ENCODE measurements at regions of chr17 and their contacts with region 1.

Region 1: DNA sequence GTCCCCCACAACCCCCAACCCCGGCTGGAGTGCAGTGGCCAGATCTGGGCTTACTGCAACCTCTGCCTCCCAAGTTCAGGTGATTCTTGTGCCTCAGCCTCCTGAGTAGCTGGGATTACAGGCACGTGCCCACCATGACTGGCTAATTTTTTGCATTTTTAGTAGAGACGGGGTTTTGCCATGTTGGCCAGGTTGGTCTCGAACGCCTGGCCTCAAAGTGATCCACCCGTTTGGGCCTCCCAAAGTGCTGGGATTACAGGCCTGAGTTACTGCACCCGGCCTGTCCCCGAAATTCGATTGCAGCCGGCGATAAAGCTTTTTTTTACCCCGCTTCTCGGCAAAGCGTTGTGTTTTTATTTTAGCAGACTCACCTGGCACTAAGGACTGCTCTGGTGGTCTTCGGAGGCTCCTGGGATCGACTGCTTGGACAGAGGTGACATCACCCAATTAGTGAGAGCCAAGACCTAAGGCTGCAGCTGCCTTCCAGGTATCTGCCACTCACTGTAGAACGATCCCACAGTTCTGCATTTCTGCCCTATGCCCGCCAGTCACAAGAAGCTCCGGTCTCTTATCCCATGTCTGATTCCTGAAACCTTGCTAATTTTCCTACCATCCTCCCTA is 82.2 kb upstream of the ARL4D start:
- DNase-seq: peak; percentile 13 to 45 (median 15)
- ATAC-seq: no peak
- H3K4me3 ChIP-seq: no peak overlapping the region
- H3K27ac ChIP-seq: no peak overlapping the region; the same call in 2 of the 3 replicates
- H3K4me1 ChIP-seq: peaks cover 2 to 11% of the 10 kb centered on the region in 2 experiments; a peak in 3 of 5 replicates
- H3K27me3 ChIP-seq: no peaks in the 10 kb centered on the region
- CTCF ChIP-seq: no peak
- EP300 ChIP-seq: no peak
- POLR2A ChIP-seq: no peak
- RAD21 ChIP-seq: no peak

Region 2: DNA sequence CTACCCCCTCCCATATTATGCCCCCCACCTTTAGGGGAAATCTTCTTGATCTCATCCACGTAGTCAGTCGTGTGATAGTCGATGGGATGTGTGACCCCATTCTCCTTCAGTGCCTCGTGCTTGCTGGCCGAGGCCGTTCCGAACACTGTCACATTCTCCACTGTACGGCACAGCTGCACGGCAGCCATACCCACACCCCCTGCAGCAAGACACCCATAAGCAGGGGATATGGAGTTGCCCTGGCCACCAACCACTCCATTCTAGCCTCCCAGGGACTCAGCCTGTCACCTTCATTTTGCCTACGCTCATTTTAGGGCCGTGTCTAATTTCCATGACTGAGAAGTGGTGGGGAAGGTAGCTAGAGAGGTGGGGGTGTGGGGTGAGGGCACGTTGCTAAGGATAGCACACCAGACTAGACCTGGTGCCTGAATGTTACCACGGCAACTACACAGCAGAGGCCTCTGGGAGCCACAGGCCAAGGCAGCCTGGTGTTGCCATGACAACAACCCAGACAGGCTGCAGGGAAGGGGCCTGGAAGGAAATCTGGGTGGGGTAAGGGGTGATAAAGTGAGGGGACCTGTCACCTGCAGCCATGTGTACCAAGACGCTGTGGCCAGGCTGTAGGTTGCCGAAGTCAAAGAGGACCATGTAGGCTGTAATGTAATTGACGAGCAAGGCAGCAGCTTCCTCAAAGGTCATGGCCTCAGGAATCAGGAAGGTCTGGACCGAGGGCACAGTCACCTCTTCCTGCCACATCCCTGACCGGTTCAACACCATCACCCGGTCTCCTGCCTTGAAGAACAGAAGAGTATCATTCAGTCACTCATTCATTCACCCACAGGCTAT is 298.4 kb before region 1 on chr17:
- CTCF ChIA-PET with region 1: no interaction called
- POLR2A ChIA-PET with region 1: interaction called, 79 read pairs
- in situ Hi-C with region 1: loop called (anchors 10 kb)
- intact Hi-C with region 1: no loop called
- DNase-seq: no peak
- ATAC-seq: no peak
- H3K4me3 ChIP-seq: no peak overlapping the region
- H3K27ac ChIP-seq: no peak overlapping the region; the same call in 2 of the 3 replicates
- H3K4me1 ChIP-seq: peaks cover 34 to 51% of the 10 kb centered on the region in 2 experiments
- H3K27me3 ChIP-seq: no peaks in the 10 kb centered on the region
- CTCF ChIP-seq: no peak
- EP300 ChIP-seq: no peak
- POLR2A ChIP-seq: no peak
- RAD21 ChIP-seq: no peak

Region 3: DNA sequence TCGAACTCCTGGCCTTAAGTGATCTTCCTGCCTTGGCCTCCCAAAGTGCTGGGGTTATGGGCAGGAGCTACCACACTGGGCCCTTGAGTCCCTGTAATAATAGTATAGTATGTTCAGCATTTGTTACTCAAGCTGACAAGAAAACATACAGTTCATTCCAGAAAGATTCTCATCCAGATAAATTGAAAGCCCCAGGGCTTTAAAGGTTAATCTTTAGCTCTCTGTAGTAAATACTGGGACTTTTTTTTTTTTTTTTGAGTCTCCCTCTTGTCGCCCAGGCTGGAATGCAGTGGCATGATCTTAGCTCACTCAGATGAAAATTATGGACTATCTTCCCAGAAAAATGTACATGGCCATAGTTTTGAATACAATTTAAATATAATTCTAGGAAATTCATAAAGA is 202.5 kb before region 1 on chr17:
- CTCF ChIA-PET with region 1: no interaction called
- POLR2A ChIA-PET with region 1: interaction called, 11 read pairs
- in situ Hi-C with region 1: no loop called
- intact Hi-C with region 1: no loop called
- DNase-seq: no peak
- ATAC-seq: no peak
- H3K4me3 ChIP-seq: no peak overlapping the region
- H3K27ac ChIP-seq: no peak overlapping the region
- H3K4me1 ChIP-seq: no peaks in the 10 kb centered on the region
- H3K27me3 ChIP-seq: no peaks in the 10 kb centered on the region
- CTCF ChIP-seq: no peak
- EP300 ChIP-seq: no peak
- POLR2A ChIP-seq: no peak
- RAD21 ChIP-seq: no peak

Region 4: GRCh38 chr17:43193251-43193650 is 123.4 kb before region 1 on chr17:
- CTCF ChIA-PET with region 1: no interaction called
- POLR2A ChIA-PET with region 1: interaction called, 48 read pairs
- in situ Hi-C with region 1: no loop called
- intact Hi-C with region 1: no loop called
- DNase-seq: no peak
- ATAC-seq: no peak
- H3K4me3 ChIP-seq: no peak overlapping the region
- H3K27ac ChIP-seq: no peak overlapping the region
- H3K4me1 ChIP-seq: no peaks in the 10 kb centered on the region
- H3K27me3 ChIP-seq: no peaks in the 10 kb centered on the region
- CTCF ChIP-seq: no peak
- EP300 ChIP-seq: no peak
- POLR2A ChIP-seq: no peak
- RAD21 ChIP-seq: no peak

Region 5: DNA sequence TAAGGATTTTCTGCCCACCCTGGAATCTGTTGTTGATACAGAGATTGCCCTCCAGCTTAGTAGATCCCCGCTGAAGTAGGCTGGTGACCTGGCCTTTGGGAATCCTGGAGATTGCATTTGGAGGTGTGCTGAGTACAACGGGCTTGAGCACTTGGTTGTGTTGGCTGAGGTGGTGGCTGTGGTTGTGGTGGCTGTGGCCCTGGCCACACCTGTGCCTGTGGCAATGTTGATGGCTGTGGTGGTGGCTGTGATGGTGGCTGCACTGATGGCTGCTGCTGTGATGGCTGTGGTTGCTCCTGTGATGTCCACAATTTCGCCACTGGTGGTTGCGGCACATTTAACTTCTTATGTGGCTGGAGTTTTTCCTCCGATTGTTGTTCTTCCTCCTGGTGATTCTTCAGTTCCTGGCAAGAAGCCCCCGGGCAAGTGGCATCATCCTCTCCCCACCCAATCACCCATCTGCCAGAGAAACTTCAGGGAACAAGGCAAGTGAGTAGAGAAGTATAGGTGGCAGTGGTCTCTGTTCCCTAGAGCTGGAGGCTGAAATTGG is 92.4 kb before region 1 on chr17:
- CTCF ChIA-PET with region 1: interaction called, 3 read pairs
- POLR2A ChIA-PET with region 1: interaction called, 89 read pairs
- in situ Hi-C with region 1: loop called (anchors 5 kb)
- intact Hi-C with region 1: no loop called
- DNase-seq: no peak
- ATAC-seq: no peak
- H3K4me3 ChIP-seq: no peak overlapping the region
- H3K27ac ChIP-seq: no peak overlapping the region
- H3K4me1 ChIP-seq: no peaks in the 10 kb centered on the region
- H3K27me3 ChIP-seq: 0 out of 5 replicates have a peak, but pooled peaks cover 0 to 6% of the 10 kb centered on the region in 2 experiments
- CTCF ChIP-seq: no peak
- EP300 ChIP-seq: no peak
- POLR2A ChIP-seq: no peak
- RAD21 ChIP-seq: no peak

Region 6: DNA sequence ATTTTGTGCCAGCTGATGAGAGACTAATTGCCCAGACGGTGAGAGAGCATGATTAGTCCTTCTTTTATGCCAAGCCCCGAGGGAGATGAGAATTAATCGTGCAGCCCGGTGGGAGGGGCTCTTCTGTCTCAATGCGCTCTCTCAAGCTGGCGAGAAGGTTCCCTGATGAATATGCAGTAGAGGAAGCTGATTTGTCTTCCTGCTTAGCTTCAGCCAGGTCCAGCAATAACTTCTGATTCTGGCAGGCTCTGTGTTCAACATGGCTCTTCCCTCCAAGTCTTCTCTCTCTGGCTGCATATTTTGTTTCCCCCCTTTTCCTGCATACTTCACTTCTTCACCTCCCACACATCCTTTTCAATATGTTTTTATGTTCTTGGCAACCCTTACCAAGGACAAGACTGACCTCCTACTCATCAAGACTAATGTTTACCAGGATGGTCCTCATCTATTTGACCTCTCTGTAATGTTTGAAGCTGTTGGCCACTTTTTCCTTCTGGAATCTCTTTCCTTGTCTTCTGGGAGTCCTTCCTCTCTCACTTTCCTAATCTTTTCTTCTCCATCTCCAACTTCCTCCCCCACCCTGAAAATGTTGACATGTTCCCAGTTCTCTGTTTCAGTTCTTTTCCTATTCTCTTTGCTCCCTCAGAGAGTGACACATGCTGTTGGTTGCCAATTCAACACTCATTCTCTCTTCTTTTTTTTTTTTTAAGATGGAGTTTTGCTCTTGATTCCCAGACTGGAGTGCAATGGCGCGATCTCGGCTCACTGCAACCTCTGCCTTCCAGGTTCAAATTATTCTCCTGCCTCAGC is 115.3 kb after region 1 on chr17:
- CTCF ChIA-PET with region 1: no interaction called
- POLR2A ChIA-PET with region 1: no interaction called
- in situ Hi-C with region 1: no loop called
- intact Hi-C with region 1: no loop called
- DNase-seq: no peak
- ATAC-seq: no peak
- H3K4me3 ChIP-seq: no peak overlapping the region
- H3K27ac ChIP-seq: no peak overlapping the region
- H3K4me1 ChIP-seq: no peaks in the 10 kb centered on the region
- H3K27me3 ChIP-seq: peaks cover 16 to 48% of the 10 kb centered on the region in 2 experiments; a peak in 4 of 5 replicates
- CTCF ChIP-seq: no peak
- EP300 ChIP-seq: no peak
- POLR2A ChIP-seq: no peak
- RAD21 ChIP-seq: no peak